Activated CD4-positive, alpha-beta T cell treated with anti-CD3 and anti-CD28 coated beads for 36 hours (primary cell): ENCODE measurements at regions of chr4 and their contacts with region 1.

Region 1: GRCh38 chr4:4248029-4248884 is at the start of gene TMEM128:
- DNase-seq: peak; percentile 95
- ATAC-seq: peak; percentile 98
- H3K4me3 Mint-ChIP-seq: peak within 1 kb of the TSS; percentile 98
- H3K27ac Mint-ChIP-seq: peak within 1 kb of the TSS; percentile 98
- H3K4me1 Mint-ChIP-seq: peaks cover 26% of the 10 kb centered on the region
- H3K27me3 Mint-ChIP-seq: no peaks in the 10 kb centered on the region
- total RNA-seq, gene TMEM128: 14.6 to 25.3 TPM

Region 2: DNA sequence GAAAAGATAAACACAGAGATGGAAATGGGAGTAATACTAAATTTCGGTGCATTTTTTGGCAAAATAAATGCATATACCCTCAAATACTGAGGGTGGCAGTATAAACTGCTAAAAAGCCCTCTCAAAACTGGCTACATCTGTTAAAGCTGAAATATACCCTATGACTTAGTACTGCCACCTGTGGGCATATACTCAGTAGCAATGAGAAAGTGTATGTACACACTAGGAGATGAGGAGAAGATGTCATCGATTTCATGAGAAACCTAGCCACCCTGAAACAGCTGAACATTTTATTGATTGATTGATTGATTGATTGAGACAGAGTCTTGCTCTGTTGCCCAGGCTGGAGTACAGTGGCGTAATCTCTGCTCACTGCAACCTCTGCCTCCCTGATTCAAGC is 12.0 kb after region 1 on chr4:
- CTCF ChIA-PET with region 1: interaction called, 14 read pairs
- POLR2A ChIA-PET with region 1: no interaction called
- intact Hi-C with region 1: no loop called
- DNase-seq: no peak
- ATAC-seq: peak; percentile 97
- H3K4me3 Mint-ChIP-seq: no peak overlapping the region
- H3K27ac Mint-ChIP-seq: no peak overlapping the region
- H3K4me1 Mint-ChIP-seq: no peaks in the 10 kb centered on the region
- H3K27me3 Mint-ChIP-seq: no peaks in the 10 kb centered on the region

Region 3: GRCh38 chr4:4334798-4335520 is 86.7 kb after region 1 on chr4:
- CTCF ChIA-PET with region 1: interaction called, 12 read pairs
- POLR2A ChIA-PET with region 1: no interaction called
- intact Hi-C with region 1: loop called (anchors 1 kb)
- DNase-seq: peak; percentile 87
- ATAC-seq: peak; percentile 97
- H3K4me3 Mint-ChIP-seq: no peak overlapping the region
- H3K27ac Mint-ChIP-seq: no peak overlapping the region
- H3K4me1 Mint-ChIP-seq: peaks cover 1% of the 10 kb centered on the region
- H3K27me3 Mint-ChIP-seq: no peaks in the 10 kb centered on the region

Region 4: DNA sequence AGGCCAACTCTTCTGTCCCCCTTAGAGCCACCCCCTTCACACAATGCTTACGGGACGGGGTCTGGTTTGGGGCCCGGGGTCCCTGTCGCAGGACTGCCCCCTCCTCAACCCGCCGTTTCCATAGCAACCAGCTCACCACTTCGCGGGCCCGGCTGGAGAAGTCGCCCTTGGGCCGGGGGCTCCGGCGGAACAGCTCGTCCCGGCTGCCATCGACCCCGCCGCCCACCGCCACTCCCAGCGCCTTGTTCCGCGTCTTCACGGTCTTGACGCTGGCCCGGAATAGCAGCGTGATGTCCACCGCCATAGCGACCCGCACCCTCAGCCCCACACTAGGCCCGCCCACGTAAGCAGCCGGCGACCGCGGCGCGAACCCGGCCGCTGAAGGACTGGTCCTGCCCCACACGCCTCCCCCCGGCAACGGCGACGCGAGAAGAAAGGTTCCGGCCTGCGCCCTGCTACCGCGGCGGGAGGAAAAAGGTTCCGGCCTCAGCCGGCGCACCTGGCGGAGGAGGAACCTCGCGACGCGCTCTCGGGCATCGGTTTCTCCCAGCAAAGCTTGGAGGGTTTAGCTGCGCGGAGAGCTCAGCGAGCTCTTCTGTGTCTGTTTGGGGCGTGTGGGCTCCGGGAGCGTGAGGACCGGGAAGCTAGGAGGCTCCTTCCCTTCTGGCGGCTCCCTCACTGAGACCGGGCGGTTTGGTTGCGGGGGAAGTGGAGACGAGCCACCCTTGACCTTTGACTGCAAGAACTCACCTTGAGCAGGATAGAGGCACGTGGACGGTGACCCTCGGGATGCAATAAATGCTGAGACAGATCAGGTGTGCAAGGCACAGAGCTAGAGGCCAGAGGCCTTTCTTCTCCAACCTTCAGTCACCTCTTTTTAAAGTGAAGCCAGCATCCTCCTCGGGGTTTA is 293.7 kb after region 1 on chr4 and contains the start of gene STX18:
- CTCF ChIA-PET with region 1: no interaction called
- POLR2A ChIA-PET with region 1: interaction called, 3 read pairs
- intact Hi-C with region 1: loop called (anchors 1 to 5 kb)
- DNase-seq: peak; percentile 92
- ATAC-seq: peak; percentile 89
- H3K4me3 Mint-ChIP-seq: peak within 1 kb of the TSS; percentile 89
- H3K27ac Mint-ChIP-seq: peak within 1 kb of the TSS; percentile 90
- H3K4me1 Mint-ChIP-seq: peaks cover 45% of the 10 kb centered on the region
- H3K27me3 Mint-ChIP-seq: no peaks in the 10 kb centered on the region
- total RNA-seq, gene STX18: 25.3 to 33.5 TPM